CD14-positive monocyte (primary cell): ENCODE measurements at regions of chr18 and their contacts with region 1.

Region 1: DNA sequence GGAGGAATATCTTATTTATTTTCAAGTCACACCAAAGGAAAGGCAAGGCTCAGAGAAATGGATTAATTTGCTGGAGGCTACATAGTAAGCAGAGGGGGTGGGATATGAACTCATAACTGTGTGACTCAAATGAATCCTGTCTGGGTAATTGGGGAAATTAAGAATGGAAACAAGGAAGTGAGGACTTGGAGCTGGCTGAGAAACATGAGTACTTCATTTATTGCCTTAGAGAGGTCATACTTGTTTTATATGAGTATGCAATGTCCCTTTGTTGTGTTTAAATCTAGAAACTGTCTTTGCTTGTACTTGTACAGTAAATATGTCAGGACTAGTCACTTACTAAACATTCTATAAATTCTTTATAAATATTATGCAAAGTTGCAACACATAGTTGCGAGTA is 2166.7 kb upstream of the PIK3C3 start:
- DNase-seq: no peak
- H3K4me3 ChIP-seq: no peak overlapping the region
- H3K4me3 Mint-ChIP-seq: no peak overlapping the region
- H3K27ac ChIP-seq: no peak overlapping the region
- H3K27ac Mint-ChIP-seq: peak overlapping the region in 1 of 7 donors; percentile 26
- H3K4me1 ChIP-seq: no peaks in the 10 kb centered on the region
- H3K4me1 Mint-ChIP-seq: peaks cover 2% of the 10 kb centered on the region
- H3K27me3 ChIP-seq: no peaks in the 10 kb centered on the region
- H3K27me3 Mint-ChIP-seq: no peaks in the 10 kb centered on the region
- CTCF ChIP-seq: no peak

Region 2: GRCh38 chr18:39841482-39842365 is 53.3 kb after region 1 on chr18:
- intact Hi-C with region 1: loop called in 1 of 2 experiments (anchors 10 kb)
- DNase-seq: no peak
- H3K4me3 ChIP-seq: peak overlapping the region in 1 of 3 experiments; percentile 25
- H3K4me3 Mint-ChIP-seq: peak overlapping the region; percentile 21 to 85
- H3K27ac ChIP-seq: no peak overlapping the region
- H3K27ac Mint-ChIP-seq: no peak overlapping the region
- H3K4me1 ChIP-seq: peaks cover 3 to 5% of the 10 kb centered on the region in 2 donors
- H3K4me1 Mint-ChIP-seq: peaks cover 10% of the 10 kb centered on the region
- H3K27me3 ChIP-seq: peaks cover 11 to 24% of the 10 kb centered on the region in 2 donors
- H3K27me3 Mint-ChIP-seq: peaks cover 15 to 30% (median 16%) of the 10 kb centered on the region in 3 donors
- CTCF ChIP-seq: no peak